Calu3 (cell line): ENCODE measurements at regions of chr14 and their contacts with region 1.

Region 1: DNA sequence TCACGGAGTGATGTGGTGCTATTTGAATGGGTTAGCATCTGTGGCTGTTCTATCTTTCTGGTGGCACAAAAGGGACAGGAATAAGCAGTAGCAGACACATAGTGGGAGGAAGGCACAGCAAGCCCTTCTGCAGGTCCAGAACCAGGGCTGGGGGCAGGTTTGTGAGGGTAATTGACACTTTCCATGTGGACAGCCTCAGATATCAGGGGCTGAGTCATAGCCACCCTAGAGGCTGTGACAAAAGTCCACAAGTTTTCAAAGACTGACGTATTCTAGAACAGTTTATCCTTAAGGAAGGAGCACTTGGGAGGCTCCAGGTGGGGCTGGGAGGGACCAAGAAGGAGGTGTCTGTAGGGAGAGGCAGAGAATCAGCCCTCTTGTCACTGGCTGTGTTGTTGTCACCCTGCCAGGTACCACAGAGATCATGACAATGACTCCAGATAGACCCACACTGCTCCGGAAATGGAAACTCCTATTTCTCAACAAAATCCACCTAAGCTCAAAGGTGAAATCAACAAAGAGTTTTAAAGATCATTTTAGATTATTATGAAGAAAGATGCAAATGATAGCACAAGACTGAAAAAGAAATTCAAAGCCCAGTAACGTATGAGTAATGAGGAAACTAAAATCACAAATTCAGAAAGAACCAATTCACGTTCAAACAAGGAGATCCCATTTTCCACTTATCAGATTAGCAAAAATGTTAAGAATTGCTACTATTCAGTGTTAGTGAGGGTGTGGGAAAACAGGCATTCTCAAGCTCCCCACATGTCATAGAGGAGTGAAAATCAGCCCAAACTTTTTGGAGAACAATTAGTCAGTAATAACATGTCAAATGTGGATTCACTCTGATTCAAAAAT is 48.3 kb downstream of the NFKBIA start:
- DNase-seq: peak; percentile 81
- H3K4me3 Mint-ChIP-seq: peak overlapping the region; percentile 49
- H3K27ac Mint-ChIP-seq: peak overlapping the region; percentile 94
- H3K4me1 Mint-ChIP-seq: peaks cover 44% of the 10 kb centered on the region
- H3K27me3 Mint-ChIP-seq: no peaks in the 10 kb centered on the region
- CTCF ChIP-seq: no peak

Region 2: GRCh38 chr14:35155962-35156361 is 200.2 kb before region 1 on chr14:
- CTCF ChIA-PET with region 1: no interaction called
- intact Hi-C with region 1: no loop called
- DNase-seq: peak; percentile 8
- H3K4me3 Mint-ChIP-seq: no peak overlapping the region
- H3K27ac Mint-ChIP-seq: peak overlapping the region; percentile 47
- H3K4me1 Mint-ChIP-seq: peaks cover 39% of the 10 kb centered on the region
- H3K27me3 Mint-ChIP-seq: no peaks in the 10 kb centered on the region
- CTCF ChIP-seq: no peak

Region 3: DNA sequence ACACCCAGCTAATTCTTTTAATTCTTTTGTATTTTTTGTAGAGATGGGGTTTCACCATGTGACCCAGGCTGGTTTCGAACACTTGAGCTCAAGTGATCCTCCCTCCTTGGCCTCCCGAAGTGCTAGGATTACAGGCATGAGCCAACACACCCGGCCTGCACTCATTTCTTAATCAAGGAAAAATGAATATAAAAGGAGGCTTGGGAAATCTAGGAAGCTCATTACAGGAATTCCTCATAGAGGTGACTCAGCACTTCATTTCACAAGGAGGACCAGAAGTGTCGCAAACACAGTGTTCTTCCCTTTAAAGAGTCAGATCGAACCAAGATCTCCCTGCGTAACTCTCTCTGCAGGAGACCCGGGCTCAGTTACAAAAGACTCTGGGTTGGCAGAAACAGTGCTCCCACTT is 18.1 kb after region 1 on chr14:
- CTCF ChIA-PET with region 1: interaction called, 4 read pairs
- intact Hi-C with region 1: loop called (anchors 1 kb)
- DNase-seq: peak; percentile 62
- H3K4me3 Mint-ChIP-seq: no peak overlapping the region
- H3K27ac Mint-ChIP-seq: peak overlapping the region; percentile 69
- H3K4me1 Mint-ChIP-seq: peaks cover 11% of the 10 kb centered on the region
- H3K27me3 Mint-ChIP-seq: no peaks in the 10 kb centered on the region
- CTCF ChIP-seq: no peak